Caco-2 (cell line): ENCODE measurements at regions of chr17 and their contacts with region 1.

Region 1: DNA sequence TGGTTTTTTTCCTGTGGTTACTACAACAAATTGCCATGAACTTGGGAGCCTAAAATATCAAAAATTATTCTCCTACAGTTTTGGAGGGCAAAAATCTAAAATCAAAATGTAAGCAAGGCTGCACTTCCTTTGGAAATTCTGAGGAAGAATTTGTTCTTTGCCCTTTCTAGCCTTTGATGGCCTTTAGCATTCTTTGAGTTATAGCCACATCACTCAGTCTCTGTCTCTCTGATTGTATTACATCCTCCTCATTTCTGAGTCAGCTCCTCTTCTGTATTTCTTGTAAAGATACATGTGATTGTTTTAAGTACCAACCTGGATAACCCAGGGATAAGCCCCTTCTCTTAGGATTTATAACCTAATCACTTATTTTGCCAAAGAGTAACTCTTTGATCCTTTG is 282.0 kb downstream of the BCAS3 start:
- DNase-seq: no peak
- H3K4me3 ChIP-seq: no peak overlapping the region
- H3K4me3 Mint-ChIP-seq: peak overlapping the region; percentile 49
- H3K27ac Mint-ChIP-seq: peak overlapping the region; percentile 48
- H3K4me1 ChIP-seq: peaks cover 18% of the 10 kb centered on the region
- H3K4me1 Mint-ChIP-seq: peaks cover 4% of the 10 kb centered on the region
- H3K27me3 ChIP-seq: no peaks in the 10 kb centered on the region
- H3K27me3 Mint-ChIP-seq: no peaks in the 10 kb centered on the region
- CTCF ChIP-seq: no peak

Region 2: DNA sequence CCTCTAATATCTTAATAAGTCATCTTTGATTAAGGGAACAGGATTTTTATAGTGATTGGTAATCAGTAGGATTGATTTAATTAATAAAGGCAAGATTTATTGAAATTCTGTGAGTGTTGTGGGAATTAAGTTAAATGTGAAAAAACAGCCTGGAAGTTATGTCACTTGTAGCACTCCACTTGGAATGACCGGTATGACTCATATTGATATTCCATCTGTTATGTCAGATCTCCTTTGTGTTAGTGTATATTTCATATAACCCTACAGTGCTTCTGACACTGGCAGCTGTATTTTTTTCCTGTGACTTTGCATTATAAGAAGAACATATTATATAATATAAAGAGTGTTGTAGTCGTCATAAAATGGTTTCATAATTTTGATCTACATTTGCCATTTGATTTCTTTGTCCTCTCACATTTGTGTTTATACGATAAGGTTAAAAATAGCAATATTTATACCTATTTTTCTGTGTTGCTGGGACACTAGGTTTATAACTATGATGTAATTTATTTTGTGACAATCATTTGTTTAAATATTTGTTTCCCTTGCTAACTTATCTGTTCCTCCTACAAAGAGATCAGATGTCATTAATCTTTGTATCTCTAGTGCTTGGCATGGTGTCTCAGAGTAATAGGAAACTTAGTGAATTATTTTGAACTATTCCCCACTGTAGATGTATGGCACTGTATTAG is 33.1 kb before region 1 on chr17:
- CTCF ChIA-PET with region 1: no interaction called
- POLR2A ChIA-PET with region 1: no interaction called
- intact Hi-C with region 1: loop called (anchors 5 kb)
- DNase-seq: no peak
- H3K4me3 ChIP-seq: no peak overlapping the region
- H3K4me3 Mint-ChIP-seq: no peak overlapping the region
- H3K27ac Mint-ChIP-seq: no peak overlapping the region
- H3K4me1 ChIP-seq: no peaks in the 10 kb centered on the region
- H3K4me1 Mint-ChIP-seq: no peaks in the 10 kb centered on the region
- H3K27me3 ChIP-seq: no peaks in the 10 kb centered on the region
- H3K27me3 Mint-ChIP-seq: no peaks in the 10 kb centered on the region
- CTCF ChIP-seq: no peak